CD14-positive monocyte (primary cell): ENCODE measurements at regions of chr21 and their contacts with region 1.

Region 1: GRCh38 chr21:34510148-34511142 is 1.6 kb downstream of the KCNE1 start:
- DNase-seq: peak; percentile 75 to 80 (median 76)
- H3K4me3 ChIP-seq: peak overlapping the region; percentile 27 to 73 (median 53)
- H3K4me3 Mint-ChIP-seq: peak overlapping the region; percentile 78 to 95
- H3K27ac ChIP-seq: peak overlapping the region; percentile 96 to 100
- H3K27ac Mint-ChIP-seq: peak overlapping the region; percentile 98 to 99 (median 99)
- H3K4me1 ChIP-seq: peaks cover 54 to 56% of the 10 kb centered on the region in 2 donors
- H3K4me1 Mint-ChIP-seq: peaks cover 75% of the 10 kb centered on the region
- H3K27me3 ChIP-seq: no peaks in the 10 kb centered on the region
- H3K27me3 Mint-ChIP-seq: peaks cover 0 to 2% (median 2%) of the 10 kb centered on the region in 3 donors
- CTCF ChIP-seq: peak; percentile 86

Region 2: GRCh38 chr21:34235514-34235913 is 274.9 kb before region 1 on chr21:
- intact Hi-C with region 1: no loop called
- DNase-seq: no peak
- H3K4me3 ChIP-seq: no peak overlapping the region
- H3K4me3 Mint-ChIP-seq: no peak overlapping the region
- H3K27ac ChIP-seq: no peak overlapping the region
- H3K27ac Mint-ChIP-seq: no peak overlapping the region
- H3K4me1 ChIP-seq: no peaks in the 10 kb centered on the region
- H3K4me1 Mint-ChIP-seq: peaks cover 5% of the 10 kb centered on the region
- H3K27me3 ChIP-seq: no peaks in the 10 kb centered on the region
- H3K27me3 Mint-ChIP-seq: peaks cover 3 to 7% (median 5%) of the 10 kb centered on the region in 3 donors
- CTCF ChIP-seq: no peak

Region 3: DNA sequence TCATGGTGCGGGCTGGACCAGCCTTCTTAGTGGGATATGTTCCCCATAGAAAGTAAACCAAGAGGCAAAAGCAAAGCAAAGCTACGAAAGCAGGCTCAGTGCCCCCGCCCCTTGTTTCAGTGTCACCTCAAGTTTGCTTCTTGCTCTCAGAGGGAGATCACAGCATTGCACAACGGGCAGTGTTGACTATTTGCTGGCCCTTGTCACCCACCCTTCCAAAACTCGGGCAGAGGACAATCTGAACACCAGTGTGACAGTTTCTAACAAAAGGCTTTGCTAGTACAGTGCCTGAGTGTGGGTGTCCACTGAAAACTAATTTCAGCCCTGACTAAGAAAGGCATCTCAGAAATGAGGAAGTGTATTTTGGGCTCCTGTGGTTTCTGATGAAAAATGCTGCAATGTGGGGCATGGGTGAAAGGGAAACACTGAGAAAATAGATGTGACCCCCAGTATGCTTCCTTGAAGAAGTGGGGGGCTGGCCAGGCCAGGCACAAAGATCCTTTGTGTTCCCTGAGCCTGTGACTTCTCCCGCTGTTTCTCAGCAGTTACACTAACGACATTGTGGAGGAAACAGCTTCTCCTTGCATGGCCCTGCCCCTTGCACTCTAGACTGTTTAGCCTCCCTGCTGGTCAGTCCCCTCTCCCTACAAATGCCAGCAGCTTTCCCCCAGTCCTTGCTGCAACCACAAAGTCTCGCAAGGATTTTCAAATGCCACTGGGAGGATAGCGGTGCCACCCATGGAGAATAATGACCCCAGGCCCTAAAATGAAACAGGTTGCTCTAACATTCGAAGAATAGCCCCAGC is 34.8 kb after region 1 on chr21:
- intact Hi-C with region 1: loop called in 1 of 2 experiments (anchors 2 kb)
- DNase-seq: peak; percentile 73 to 82 (median 75)
- H3K4me3 ChIP-seq: peak overlapping the region in 2 of 3 experiments; percentile 18 to 62
- H3K4me3 Mint-ChIP-seq: peak overlapping the region; percentile 62 to 75
- H3K27ac ChIP-seq: peak overlapping the region; percentile 84 to 92
- H3K27ac Mint-ChIP-seq: peak overlapping the region; percentile 88 to 97 (median 95)
- H3K4me1 ChIP-seq: peaks cover 49 to 50% of the 10 kb centered on the region in 2 donors
- H3K4me1 Mint-ChIP-seq: peaks cover 48% of the 10 kb centered on the region
- H3K27me3 ChIP-seq: no peaks in the 10 kb centered on the region
- H3K27me3 Mint-ChIP-seq: peaks cover 0 to 6% (median 0%) of the 10 kb centered on the region in 3 donors
- CTCF ChIP-seq: no peak

Region 4: GRCh38 chr21:34582506-34583150 is 72.2 kb after region 1 on chr21:
- intact Hi-C with region 1: loop called in 1 of 2 experiments (anchors 2 kb)
- DNase-seq: peak; percentile 36 to 59 (median 45)
- H3K4me3 ChIP-seq: no peak overlapping the region
- H3K4me3 Mint-ChIP-seq: peak overlapping the region in 1 of 2 donors; percentile 51
- H3K27ac ChIP-seq: no peak overlapping the region
- H3K27ac Mint-ChIP-seq: peak overlapping the region in 2 of 7 donors; percentile 58 to 67
- H3K4me1 ChIP-seq: peaks cover 3 to 5% of the 10 kb centered on the region in 2 donors
- H3K4me1 Mint-ChIP-seq: peaks cover 19% of the 10 kb centered on the region
- H3K27me3 ChIP-seq: no peaks in the 10 kb centered on the region
- H3K27me3 Mint-ChIP-seq: no peaks in the 10 kb centered on the region
- CTCF ChIP-seq: peak; percentile 54